ENCODE measurements at regions of chr2 and their contacts with region 1.

Region 1: GRCh38 chr2:134988994-134989605 is 58.1 kb downstream of the MAP3K19 start:
- DNase-seq: peak; percentile 58
- ATAC-seq: peak; percentile 74
- H3K4me3 ChIP-seq: no peak overlapping the region
- H3K27ac ChIP-seq: no peak overlapping the region
- H3K4me1 ChIP-seq: no peaks in the 10 kb centered on the region
- H3K27me3 ChIP-seq: peaks cover 35% of the 10 kb centered on the region
- CTCF ChIP-seq: peak; percentile 79

Region 2: DNA sequence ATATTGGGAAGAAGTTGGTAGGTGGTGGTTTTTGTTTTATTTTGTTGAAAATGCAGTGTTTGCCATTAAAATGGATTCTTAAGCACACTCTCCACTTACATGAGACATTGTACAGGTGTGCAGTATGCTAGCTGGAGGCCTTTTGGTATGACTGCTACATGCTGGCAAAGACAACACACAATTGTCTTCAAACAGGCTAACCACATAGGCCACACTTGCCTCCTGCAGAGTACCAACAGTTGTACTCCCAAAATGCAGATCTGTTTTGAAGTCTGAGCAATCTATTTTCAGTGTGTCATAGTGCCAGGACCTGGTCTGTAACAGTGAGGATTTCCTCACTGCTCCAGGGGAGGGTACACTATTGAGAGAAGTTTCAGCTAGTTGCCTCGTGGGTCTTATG is 328.3 kb after region 1 on chr2:
- CTCF ChIA-PET with region 1: no interaction called
- POLR2A ChIA-PET with region 1: no interaction called
- intact Hi-C with region 1: no loop called
- DNase-seq: no peak
- ATAC-seq: no peak
- H3K4me3 ChIP-seq: no peak overlapping the region
- H3K27ac ChIP-seq: no peak overlapping the region
- H3K4me1 ChIP-seq: no peaks in the 10 kb centered on the region
- H3K27me3 ChIP-seq: no peaks in the 10 kb centered on the region
- CTCF ChIP-seq: no peak

Region 3: DNA sequence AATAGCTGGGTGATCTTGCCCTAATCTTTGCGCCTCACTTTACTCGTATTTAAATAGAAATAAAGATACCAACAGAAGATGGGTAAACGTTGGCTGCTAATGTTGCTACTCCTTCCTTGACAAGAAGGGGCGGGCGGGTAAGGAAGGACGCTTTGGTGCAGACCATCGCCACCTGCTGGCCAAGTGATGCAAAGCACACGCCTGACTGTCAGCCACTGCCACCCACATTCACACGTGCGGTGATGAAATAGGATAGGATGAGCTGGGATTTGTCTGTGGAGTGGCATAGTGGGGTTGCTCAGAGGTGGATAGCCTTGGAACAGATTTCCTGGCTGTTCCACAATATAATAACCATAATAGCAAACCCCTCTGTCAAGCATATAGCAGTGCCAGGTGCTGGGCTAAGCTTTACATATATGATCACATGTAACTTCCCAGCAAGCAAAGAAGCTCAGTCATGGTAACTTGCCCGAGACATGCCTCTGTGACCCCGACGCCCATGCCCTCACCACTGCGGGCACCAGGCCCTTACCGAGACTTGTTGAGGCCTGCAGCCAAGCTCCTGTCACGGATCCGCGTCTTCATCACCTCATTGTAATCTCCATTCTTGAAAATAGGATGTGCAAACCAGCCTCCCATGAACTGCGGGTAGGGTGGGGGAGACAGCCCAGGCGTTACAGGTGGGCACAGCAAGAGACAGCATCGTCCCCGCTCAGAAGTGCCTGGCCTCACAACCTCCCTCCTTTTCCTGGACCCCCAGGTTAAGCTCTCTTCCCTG is 808.6 kb after region 1 on chr2:
- CTCF ChIA-PET with region 1: interaction called, 6 read pairs
- POLR2A ChIA-PET with region 1: no interaction called
- intact Hi-C with region 1: loop called (anchors 1 kb)
- DNase-seq: peak; percentile 79
- ATAC-seq: peak; percentile 94
- H3K4me3 ChIP-seq: no peak overlapping the region
- H3K27ac ChIP-seq: no peak overlapping the region
- H3K4me1 ChIP-seq: no peaks in the 10 kb centered on the region
- H3K27me3 ChIP-seq: no peaks in the 10 kb centered on the region
- CTCF ChIP-seq: peak; percentile 95

Measured in PC-3 (cell line).